Psoas muscle (tissue), 8 donors: ENCODE measurements at regions of chr11 and their contacts with region 1.

Region 1: GRCh38 chr11:62556108-62556871 is 9.7 kb upstream of the AHNAK start:
- DNase-seq: peak; percentile 94 to 96
- ATAC-seq: peak; percentile 50 to 60 (median 56)
- H3K4me3 ChIP-seq: peak overlapping the region; percentile 41
- H3K27ac ChIP-seq: peak overlapping the region; percentile 99
- H3K4me1 ChIP-seq: peaks cover 72% of the 10 kb centered on the region
- H3K27me3 ChIP-seq: no peaks in the 10 kb centered on the region
- CTCF ChIP-seq: no peak

Region 2: DNA sequence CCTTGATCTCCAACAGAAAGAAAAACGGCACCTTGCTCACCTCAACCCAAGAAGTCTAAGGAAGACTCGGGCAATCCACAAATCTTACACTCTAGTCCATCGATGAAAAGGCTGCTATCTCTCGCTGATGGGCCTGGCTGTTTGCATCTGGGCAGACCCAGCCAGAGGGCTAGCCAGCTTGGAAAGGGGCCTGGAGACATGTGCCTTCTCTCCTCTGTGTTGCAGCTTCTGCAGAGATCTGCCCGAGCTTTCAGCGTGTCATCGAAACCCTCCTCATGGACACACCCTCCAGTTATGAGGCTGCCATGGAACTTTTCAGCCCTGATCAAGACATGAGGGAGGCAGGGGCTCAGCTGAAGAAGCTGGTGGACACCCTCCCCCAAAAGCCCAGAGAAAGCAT is 134.3 kb before region 1 on chr11:
- intact Hi-C with region 1: loop called in 1 of 2 experiments (anchors 1 kb)
- DNase-seq: peak in 1 of 2 donors; percentile 49
- ATAC-seq: no peak
- H3K4me3 ChIP-seq: no peak overlapping the region
- H3K27ac ChIP-seq: no peak overlapping the region
- H3K4me1 ChIP-seq: no peaks in the 10 kb centered on the region
- H3K27me3 ChIP-seq: no peaks in the 10 kb centered on the region
- CTCF ChIP-seq: no peak

Region 3: GRCh38 chr11:62497132-62497915 is 59.0 kb before region 1 on chr11:
- intact Hi-C with region 1: loop called in 1 of 2 experiments (anchors 5 kb)
- DNase-seq: no peak
- ATAC-seq: peak; percentile 83 to 89 (median 86)
- H3K4me3 ChIP-seq: no peak overlapping the region
- H3K27ac ChIP-seq: peak overlapping the region; percentile 83
- H3K4me1 ChIP-seq: peaks cover 47% of the 10 kb centered on the region
- H3K27me3 ChIP-seq: no peaks in the 10 kb centered on the region
- CTCF ChIP-seq: peak; percentile 57